ENCODE measurements at regions of chr17 and their contacts with region 1.

Region 1: GRCh38 chr17:73595479-73595878 is 48.8 kb downstream of the SDK2 start:
- DNase-seq: peak; percentile 55
- H3K4me3 ChIP-seq: no peak overlapping the region
- H3K27ac ChIP-seq: peak overlapping the region; percentile 96
- H3K4me1 ChIP-seq: peaks cover 67% of the 10 kb centered on the region
- CTCF ChIP-seq: peak; percentile 71

Region 2: GRCh38 chr17:72021417-72022041 is 1574.0 kb before region 1 on chr17:
- CTCF ChIA-PET with region 1: no interaction called
- POLR2A ChIA-PET with region 1: no interaction called
- intact Hi-C with region 1: loop called (anchors 10 kb)
- DNase-seq: peak; percentile 65
- H3K4me3 ChIP-seq: peak overlapping the region; percentile 20
- H3K27ac ChIP-seq: peak overlapping the region; percentile 83
- H3K4me1 ChIP-seq: peaks cover 86% of the 10 kb centered on the region
- CTCF ChIP-seq: no peak

Region 3: DNA sequence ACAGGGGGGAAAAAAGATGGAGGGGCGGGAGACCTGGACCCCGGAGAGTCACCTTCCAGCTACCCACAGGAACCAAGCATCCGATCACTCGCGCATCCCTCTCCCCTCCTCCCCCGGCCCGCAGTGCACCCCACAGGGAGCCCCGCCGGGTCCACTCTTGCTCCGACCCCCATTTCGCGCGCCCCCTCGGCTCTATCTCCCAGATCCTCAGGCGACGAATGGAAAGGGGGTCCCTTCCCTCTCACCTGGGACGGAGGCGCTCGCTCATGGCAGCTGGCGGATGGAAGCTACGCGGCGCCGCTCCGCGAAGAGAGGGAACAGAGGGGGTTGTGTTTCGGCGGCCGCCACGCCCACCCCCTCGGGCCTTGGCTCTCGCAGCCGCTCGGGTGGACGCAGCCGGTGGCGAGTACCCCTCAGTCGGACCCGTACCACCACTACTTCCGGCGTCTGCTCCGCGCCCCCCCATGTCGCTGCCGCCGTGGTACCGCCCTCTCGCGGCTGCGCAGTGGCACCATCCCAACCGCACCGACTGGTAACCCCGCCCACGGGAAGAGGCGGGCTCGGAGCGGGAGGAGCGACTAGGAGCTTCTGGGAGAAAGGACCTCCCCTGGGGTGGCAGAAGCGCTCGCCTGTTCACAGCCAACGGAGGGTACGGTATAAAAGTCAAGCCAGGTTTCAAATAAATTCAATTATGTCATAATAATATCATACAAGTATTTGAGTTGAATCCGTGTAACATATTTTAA is 363.5 kb before region 1 on chr17:
- CTCF ChIA-PET with region 1: no interaction called
- POLR2A ChIA-PET with region 1: no interaction called
- intact Hi-C with region 1: loop called (anchors 2 kb)
- DNase-seq: peak; percentile 99
- H3K4me3 ChIP-seq: peak overlapping the region; percentile 83
- H3K27ac ChIP-seq: peak overlapping the region; percentile 43
- H3K4me1 ChIP-seq: peaks cover 51% of the 10 kb centered on the region
- CTCF ChIP-seq: no peak

Region 4: GRCh38 chr17:73546770-73547536 is 48.5 kb before region 1 on chr17:
- CTCF ChIA-PET with region 1: no interaction called
- POLR2A ChIA-PET with region 1: no interaction called
- intact Hi-C with region 1: no loop called
- DNase-seq: peak; percentile 95
- H3K4me3 ChIP-seq: no peak overlapping the region
- H3K27ac ChIP-seq: no peak overlapping the region
- H3K4me1 ChIP-seq: peaks cover 22% of the 10 kb centered on the region
- CTCF ChIP-seq: no peak

Region 5: GRCh38 chr17:73560661-73561060 is 34.8 kb before region 1 on chr17:
- CTCF ChIA-PET with region 1: no interaction called
- POLR2A ChIA-PET with region 1: no interaction called
- intact Hi-C with region 1: no loop called
- DNase-seq: peak; percentile 48
- H3K4me3 ChIP-seq: no peak overlapping the region
- H3K27ac ChIP-seq: no peak overlapping the region
- H3K4me1 ChIP-seq: peaks cover 9% of the 10 kb centered on the region
- CTCF ChIP-seq: peak; percentile 64

Region 6: DNA sequence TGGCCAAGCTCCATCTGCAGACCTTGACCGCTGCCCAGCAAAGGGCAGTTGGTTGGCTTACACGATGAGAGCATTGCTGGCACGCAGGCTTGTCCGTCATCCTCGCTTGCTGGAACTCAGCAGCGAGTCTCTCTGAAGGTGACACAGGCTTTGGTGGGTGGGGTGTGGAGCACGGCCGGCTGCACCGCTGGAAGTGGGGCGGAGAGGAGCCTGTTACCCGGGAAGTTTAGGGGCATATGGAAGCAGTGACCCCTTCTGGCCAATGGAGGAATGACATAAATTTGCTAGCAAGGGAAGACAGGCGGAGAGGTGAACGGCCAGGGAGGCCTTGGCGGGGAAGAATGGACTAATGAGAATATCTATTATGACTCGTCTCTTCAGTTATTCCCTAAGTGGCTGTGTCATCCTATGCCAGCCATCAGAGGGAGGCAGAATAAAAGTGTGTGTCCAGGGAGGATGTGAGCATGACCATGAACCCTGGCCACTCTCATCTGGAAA is 114.7 kb after region 1 on chr17:
- CTCF ChIA-PET with region 1: interaction called, 5 read pairs
- POLR2A ChIA-PET with region 1: interaction called, 11 read pairs
- intact Hi-C with region 1: loop called (anchors 1 kb)
- DNase-seq: peak; percentile 60
- H3K4me3 ChIP-seq: peak overlapping the region; percentile 59
- H3K27ac ChIP-seq: peak overlapping the region; percentile 76
- H3K4me1 ChIP-seq: peaks cover 29% of the 10 kb centered on the region
- CTCF ChIP-seq: peak; percentile 95

Region 7: GRCh38 chr17:74212913-74213791 is 617.7 kb after region 1 on chr17 and contains the start of gene TTYH2:
- CTCF ChIA-PET with region 1: no interaction called
- POLR2A ChIA-PET with region 1: no interaction called
- intact Hi-C with region 1: loop called (anchors 5 kb)
- DNase-seq: peak; percentile 83
- H3K4me3 ChIP-seq: peak within 1 kb of the TSS; percentile 68
- H3K27ac ChIP-seq: peak within 1 kb of the TSS; percentile 53
- H3K4me1 ChIP-seq: peaks cover 56% of the 10 kb centered on the region
- CTCF ChIP-seq: peak; percentile 47; the same call in 1 of the 2 replicates
- total RNA-seq, gene TTYH2: 1.7 and 3.1 TPM in 2 replicates

Measured in OCI-LY7 (cell line).